ENCODE measurements at regions of chr13 and their contacts with region 1.

Region 1: GRCh38 chr13:78121459-78122348 is 203.1 kb upstream of the EDNRB start:
- DNase-seq: no peak
- H3K4me3 ChIP-seq: no peak overlapping the region
- H3K27ac ChIP-seq: no peak overlapping the region
- H3K27me3 ChIP-seq: peaks cover 3% of the 10 kb centered on the region
- CTCF ChIP-seq: peak; percentile 88

Region 2: DNA sequence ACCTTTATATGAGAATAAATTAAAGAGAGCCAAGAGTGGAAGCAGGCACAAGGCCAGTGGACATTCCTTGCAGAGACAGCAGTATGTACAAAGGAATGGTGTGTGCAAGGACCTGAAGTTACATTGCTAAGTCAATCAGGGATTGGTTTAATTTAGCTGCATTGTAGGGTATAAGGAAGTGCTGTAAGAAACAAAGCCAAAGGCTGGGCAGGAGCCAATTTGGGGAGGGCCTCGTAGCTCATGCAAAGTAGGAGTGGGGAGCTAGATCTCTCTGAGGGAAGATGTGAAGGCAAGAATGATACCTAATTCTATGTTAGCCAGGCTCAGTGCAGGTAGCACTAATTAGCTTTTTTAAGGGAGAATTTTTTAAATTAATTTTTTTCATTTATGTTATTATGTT is 347.5 kb before region 1 on chr13:
- CTCF ChIA-PET with region 1: interaction called, 49 read pairs
- POLR2A ChIA-PET with region 1: no interaction called
- DNase-seq: no peak
- H3K4me3 ChIP-seq: no peak overlapping the region
- H3K27ac ChIP-seq: no peak overlapping the region
- H3K27me3 ChIP-seq: no peaks in the 10 kb centered on the region
- CTCF ChIP-seq: no peak

Region 3: DNA sequence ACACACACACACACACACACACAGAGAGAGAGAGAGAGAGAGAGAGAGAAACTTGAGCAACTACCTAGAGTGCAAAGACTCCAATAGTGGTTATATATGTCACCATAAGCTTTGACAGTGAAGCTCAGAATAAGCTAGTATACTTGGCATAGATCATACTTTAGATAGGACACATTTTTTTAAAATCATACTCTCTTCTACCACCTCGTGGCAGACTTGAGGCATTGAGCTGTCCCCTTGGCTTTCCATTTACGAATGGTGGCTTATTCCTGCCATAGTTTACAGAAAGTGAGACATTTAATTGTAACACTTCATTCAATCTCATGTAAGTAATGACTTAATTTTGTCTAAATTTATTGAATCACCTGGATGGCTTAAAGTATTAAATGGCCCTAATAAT is 311.3 kb before region 1 on chr13:
- CTCF ChIA-PET with region 1: interaction called, 22 read pairs
- POLR2A ChIA-PET with region 1: no interaction called
- DNase-seq: no peak
- H3K4me3 ChIP-seq: no peak overlapping the region
- H3K27ac ChIP-seq: no peak overlapping the region
- H3K27me3 ChIP-seq: no peaks in the 10 kb centered on the region
- CTCF ChIP-seq: peak; percentile 65

Region 4: DNA sequence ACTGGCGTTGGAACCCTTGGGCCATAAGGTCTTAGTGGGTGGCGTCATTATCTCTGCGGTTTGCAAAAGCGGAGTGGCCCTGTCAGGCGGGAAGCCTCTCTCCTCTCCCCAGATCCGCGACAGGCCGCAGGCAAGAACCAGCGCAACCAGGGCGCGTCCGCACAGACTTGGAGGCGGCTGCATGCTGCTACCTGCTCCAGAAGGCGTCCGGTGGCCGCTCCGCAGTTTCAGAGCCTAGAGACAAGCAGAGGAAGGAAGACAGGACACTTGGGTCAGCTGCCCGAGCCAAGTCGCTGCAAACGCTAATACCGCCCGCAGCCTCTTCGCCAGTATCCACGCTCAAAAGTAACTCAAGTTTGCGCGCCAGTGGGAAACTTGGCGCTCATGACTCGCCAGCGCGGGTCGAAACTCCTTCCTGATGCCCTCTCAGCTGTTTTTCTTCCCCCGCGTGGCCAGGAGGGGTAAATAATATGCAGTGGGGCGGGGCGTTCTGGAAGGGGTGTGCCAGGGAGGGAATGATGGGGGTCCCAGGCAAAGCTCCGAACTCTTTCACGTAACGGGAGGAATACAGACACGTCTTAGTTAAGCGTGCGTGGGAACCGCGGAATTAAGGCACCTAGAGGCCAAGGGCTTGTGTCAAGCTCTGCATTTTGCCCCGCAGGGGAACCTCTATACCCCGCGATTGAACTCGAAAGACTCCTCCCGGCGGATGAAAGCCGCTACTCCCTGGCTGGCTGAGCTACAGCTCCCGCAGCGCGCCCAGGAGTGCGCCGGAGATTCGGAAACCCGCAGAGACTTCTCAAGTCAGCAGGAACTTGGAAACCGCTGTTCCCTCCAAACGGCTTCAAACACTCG is 203.1 kb before region 1 on chr13 and contains the start of gene EDNRB:
- CTCF ChIA-PET with region 1: interaction called, 28 read pairs
- POLR2A ChIA-PET with region 1: no interaction called
- DNase-seq: no peak
- H3K4me3 ChIP-seq: peak within 1 kb of the TSS; percentile 68
- H3K27ac ChIP-seq: no peak within 1 kb of the TSS
- H3K27me3 ChIP-seq: peaks cover 3% of the 10 kb centered on the region
- CTCF ChIP-seq: peak; percentile 24; the same call in 1 of the 2 replicates
- polyA plus RNA-seq, gene EDNRB: 5.8 and 7.2 TPM in 2 replicates

Region 5: GRCh38 chr13:78131811-78132210 is 10.1 kb after region 1 on chr13:
- CTCF ChIA-PET with region 1: interaction called, 27 read pairs
- POLR2A ChIA-PET with region 1: no interaction called
- DNase-seq: no peak
- H3K4me3 ChIP-seq: no peak overlapping the region
- H3K27ac ChIP-seq: no peak overlapping the region
- H3K27me3 ChIP-seq: peaks cover 2% of the 10 kb centered on the region
- CTCF ChIP-seq: peak; percentile 49

Region 6: GRCh38 chr13:79398915-79399314 is 1277.2 kb after region 1 on chr13:
- CTCF ChIA-PET with region 1: interaction called, 12 read pairs
- POLR2A ChIA-PET with region 1: no interaction called
- DNase-seq: no peak
- H3K4me3 ChIP-seq: no peak overlapping the region
- H3K27ac ChIP-seq: no peak overlapping the region
- H3K27me3 ChIP-seq: no peaks in the 10 kb centered on the region
- CTCF ChIP-seq: no peak

Measured in AG04450 (cell line).